PC-9 (cell line): ENCODE measurements at regions of chr6 and their contacts with region 1.

Region 1: DNA sequence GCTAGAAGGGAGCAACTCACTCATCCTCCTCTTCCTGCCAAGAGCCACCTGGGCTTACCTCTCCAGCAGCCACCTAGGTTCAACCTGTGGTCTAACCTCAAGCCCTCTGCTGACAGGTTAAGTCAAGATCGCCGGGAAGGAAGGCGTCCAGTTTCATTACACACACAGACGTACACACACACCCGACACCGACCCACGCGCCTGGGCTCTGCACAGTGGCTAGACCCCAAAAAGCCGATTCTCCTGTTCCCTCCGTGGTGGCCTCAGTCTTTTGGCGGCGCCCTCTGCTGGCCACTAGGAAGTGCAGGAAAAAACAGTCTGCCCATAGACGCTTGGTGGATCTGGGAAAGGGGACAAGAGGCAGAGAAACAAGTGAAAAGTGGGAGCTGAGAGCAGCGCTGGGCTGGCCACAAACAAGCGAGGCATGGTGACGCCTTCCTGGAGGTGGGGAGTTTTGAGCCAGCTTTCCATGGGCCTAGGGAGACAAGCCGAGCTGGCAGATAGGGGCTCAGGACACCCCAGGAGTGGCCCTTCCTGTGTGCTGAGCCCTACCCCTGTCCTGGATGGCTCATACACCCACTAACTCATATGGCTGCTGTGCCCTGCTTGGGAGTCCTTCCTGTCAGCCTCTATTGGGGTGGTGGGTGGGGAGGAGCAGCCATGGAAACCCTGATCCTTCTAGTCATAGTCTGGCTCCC is 52.7 kb downstream of the MRPL14 start:
- DNase-seq: peak; percentile 67 to 87
- H3K4me3 ChIP-seq: peak overlapping the region; percentile 66
- H3K27ac ChIP-seq: peak overlapping the region; percentile 94
- H3K4me1 ChIP-seq: peaks cover 80% of the 10 kb centered on the region
- H3K27me3 ChIP-seq: no peaks in the 10 kb centered on the region
- CTCF ChIP-seq: peak; percentile 94

Region 2: DNA sequence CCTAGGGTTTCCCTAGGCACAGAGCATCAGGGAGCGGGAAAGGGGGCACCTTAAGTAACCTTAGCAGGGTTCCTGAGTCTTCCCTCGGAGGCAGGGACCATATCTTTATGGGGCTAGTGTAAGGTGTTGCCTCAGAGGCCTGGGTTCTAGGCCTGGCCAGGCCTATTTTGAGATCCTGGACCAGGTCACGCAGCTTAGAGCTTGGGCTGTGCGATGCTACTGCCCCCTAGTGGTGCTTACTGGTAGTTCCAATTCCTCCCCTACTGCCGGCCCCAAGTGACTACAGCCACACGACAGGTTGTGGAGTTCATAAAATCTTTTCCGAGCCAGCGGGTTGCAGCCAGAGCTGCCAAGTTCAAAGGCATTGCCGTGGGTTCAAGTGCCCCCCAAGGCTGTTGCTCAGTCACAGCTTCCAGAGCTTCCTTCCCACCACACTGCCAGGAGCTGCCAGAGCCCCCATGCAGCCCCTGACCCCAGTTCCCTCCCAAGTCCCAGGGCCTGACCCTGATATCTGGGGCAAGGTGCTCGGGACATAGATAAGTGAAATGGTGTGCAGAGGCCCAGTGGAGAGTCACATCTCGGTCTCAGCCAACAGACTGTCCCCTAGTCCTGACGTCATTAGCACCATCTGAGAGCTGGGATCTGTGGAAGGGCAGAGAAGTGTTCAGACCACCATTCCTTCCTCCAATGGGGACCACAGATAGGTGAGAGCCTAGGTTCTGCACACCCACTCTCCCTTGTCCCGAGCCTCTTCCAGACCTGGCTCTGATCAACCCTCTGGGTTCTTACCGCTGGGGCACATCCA is 567.7 kb before region 1 on chr6:
- CTCF ChIA-PET with region 1: no interaction called
- POLR2A ChIA-PET with region 1: no interaction called
- intact Hi-C with region 1: loop called (anchors 2 kb)
- DNase-seq: peak; percentile 62 to 77
- H3K4me3 ChIP-seq: no peak overlapping the region
- H3K27ac ChIP-seq: no peak overlapping the region
- H3K4me1 ChIP-seq: 0 out of 2 replicates have a peak, but pooled peaks cover 7% of the 10 kb centered on the region
- H3K27me3 ChIP-seq: no peaks in the 10 kb centered on the region
- CTCF ChIP-seq: peak; percentile 94

Region 3: DNA sequence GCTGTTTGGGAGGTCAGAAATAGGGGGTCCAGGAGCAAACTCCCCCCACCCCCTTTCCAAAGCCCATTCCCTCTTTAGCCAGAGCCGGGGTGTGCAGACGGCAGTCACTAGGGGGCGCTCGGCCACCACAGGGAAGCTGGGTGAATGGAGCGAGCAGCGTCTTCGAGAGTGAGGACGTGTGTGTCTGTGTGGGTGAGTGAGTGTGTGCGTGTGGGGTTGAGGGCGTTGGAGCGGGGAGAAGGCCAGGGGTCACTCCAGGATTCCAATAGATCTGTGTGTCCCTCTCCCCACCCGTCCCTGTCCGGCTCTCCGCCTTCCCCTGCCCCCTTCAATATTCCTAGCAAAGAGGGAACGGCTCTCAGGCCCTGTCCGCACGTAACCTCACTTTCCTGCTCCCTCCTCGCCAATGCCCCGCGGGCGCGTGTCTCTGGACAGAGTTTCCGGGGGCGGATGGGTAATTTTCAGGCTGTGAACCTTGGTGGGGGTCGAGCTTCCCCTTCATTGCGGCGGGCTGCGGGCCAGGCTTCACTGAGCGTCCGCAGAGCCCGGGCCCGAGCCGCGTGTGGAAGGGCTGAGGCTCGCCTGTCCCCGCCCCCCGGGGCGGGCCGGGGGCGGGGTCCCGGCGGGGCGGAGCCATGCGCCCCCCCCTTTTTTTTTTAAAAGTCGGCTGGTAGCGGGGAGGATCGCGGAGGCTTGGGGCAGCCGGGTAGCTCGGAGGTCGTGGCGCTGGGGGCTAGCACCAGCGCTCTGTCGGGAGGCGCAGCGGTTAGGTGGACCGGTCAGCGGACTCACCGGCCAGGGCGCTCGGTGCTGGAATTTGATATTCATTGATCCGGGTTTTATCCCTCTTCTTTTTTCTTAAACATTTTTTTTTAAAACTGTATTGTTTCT is 304.8 kb before region 1 on chr6 and contains the start of gene VEGFA:
- CTCF ChIA-PET with region 1: interaction called, 19 read pairs
- POLR2A ChIA-PET with region 1: interaction called, 9 read pairs
- intact Hi-C with region 1: loop called (anchors 1 kb)
- DNase-seq: peak; percentile 76 to 85
- H3K4me3 ChIP-seq: peak within 1 kb of the TSS; percentile 90
- H3K27ac ChIP-seq: peak within 1 kb of the TSS; percentile 94
- H3K4me1 ChIP-seq: peaks cover 12% of the 10 kb centered on the region
- H3K27me3 ChIP-seq: no peaks in the 10 kb centered on the region
- CTCF ChIP-seq: peak; percentile 99
- total RNA-seq, gene VEGFA: 112 and 117 TPM in 2 replicates

Region 4: GRCh38 chr6:43926634-43927524 is 147.7 kb before region 1 on chr6:
- CTCF ChIA-PET with region 1: interaction called, 5 read pairs
- POLR2A ChIA-PET with region 1: interaction called, 5 read pairs
- intact Hi-C with region 1: loop called (anchors 1 kb)
- DNase-seq: peak; percentile 86 to 99
- H3K4me3 ChIP-seq: peak overlapping the region; percentile 7; the same call in 1 of the 2 replicates
- H3K27ac ChIP-seq: peak overlapping the region; percentile 99
- H3K4me1 ChIP-seq: peaks cover 57% of the 10 kb centered on the region
- H3K27me3 ChIP-seq: no peaks in the 10 kb centered on the region
- CTCF ChIP-seq: no peak

Region 5: DNA sequence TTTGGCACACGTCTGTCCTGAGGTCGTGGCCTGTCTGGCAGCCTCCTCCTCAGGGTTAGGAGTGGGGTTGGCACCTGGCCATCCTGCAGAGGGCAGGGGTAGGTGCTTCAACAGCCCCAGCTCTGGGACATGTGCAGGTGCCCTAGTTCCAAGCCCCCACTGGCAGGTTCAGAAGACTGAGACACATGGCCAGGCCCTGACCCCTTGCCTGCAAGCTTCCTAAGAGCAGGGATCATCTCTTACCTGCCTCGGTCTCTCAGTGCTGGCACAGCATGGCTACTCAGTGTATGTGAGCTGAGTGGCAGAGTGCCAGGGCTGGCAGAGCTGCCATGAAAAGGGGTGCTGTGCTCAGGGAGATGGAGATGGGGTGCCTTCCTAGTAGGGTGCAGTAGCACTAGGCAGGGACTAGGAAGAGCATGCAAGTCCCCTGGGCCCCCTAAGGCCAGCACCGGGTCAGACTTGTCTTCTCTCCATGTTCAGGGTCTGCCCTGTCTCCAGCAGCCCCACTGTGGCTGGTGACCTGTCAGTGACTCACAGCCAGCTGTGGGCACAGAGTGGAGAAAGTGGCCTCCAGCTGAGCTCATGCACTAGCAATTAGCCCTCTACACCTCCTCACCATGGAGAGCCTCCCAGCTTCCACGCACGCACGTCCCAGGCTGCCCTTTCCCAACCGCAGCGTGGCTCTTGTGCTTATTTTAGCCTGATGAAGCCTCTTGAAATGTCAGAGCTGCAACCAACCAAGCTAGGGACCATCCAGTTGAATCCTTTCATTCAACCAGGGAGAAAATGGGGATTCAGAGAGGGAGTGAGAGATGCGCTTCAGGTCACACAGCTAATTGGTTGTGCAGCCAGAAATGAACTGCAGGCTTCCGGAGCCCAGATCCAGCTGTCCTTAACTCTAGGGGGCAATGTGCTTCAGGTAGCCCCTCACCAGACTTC is 63.9 kb before region 1 on chr6:
- CTCF ChIA-PET with region 1: interaction called, 5 read pairs
- POLR2A ChIA-PET with region 1: interaction called, 15 read pairs
- intact Hi-C with region 1: no loop called
- DNase-seq: peak; percentile 62 to 84
- H3K4me3 ChIP-seq: no peak overlapping the region
- H3K27ac ChIP-seq: peak overlapping the region; percentile 91
- H3K4me1 ChIP-seq: peaks cover 75% of the 10 kb centered on the region
- H3K27me3 ChIP-seq: no peaks in the 10 kb centered on the region
- CTCF ChIP-seq: no peak

Region 6: DNA sequence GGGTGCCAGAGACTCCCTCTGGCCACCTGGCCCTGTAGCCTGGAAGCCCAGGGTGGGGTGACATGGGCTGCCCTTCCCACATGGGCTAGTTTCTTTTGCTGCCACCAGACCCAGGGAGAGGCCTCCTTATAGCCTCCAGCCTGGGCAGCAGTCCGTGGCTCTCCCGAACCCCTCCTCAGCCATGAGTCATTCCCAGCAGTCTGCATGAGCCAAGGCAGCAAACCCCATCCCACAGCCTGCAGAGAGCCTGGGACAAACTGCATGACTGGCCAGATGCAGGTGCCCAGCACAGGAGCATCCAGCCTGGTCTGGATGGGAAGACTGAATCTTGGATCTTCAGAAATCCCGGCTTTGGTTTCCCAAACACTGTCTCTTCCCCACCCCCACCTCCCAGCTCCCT is 23.1 kb before region 1 on chr6:
- CTCF ChIA-PET with region 1: interaction called, 10 read pairs
- POLR2A ChIA-PET with region 1: no interaction called
- intact Hi-C with region 1: no loop called
- DNase-seq: peak; percentile 69 to 81
- H3K4me3 ChIP-seq: no peak overlapping the region
- H3K27ac ChIP-seq: peak overlapping the region; percentile 96
- H3K4me1 ChIP-seq: peaks cover 100% of the 10 kb centered on the region
- H3K27me3 ChIP-seq: no peaks in the 10 kb centered on the region
- CTCF ChIP-seq: no peak